ENCODE measurements at regions of chr22 and their contacts with region 1.

Region 1: GRCh38 chr22:30634471-30635233 is 929 bp upstream of the SLC35E4 start:
- DNase-seq: peak; percentile 92
- ATAC-seq: peak; percentile 67
- H3K4me3 Mint-ChIP-seq: peak overlapping the region; percentile 76
- H3K27ac Mint-ChIP-seq: peak overlapping the region; percentile 86
- H3K4me1 Mint-ChIP-seq: peaks cover 18% of the 10 kb centered on the region
- H3K27me3 Mint-ChIP-seq: no peaks in the 10 kb centered on the region

Region 2: GRCh38 chr22:30606455-30607299 is 28.0 kb before region 1 on chr22 and contains the start of gene TCN2:
- CTCF ChIA-PET with region 1: interaction called, 44 read pairs
- POLR2A ChIA-PET with region 1: interaction called, 3 read pairs
- DNase-seq: peak; percentile 62
- ATAC-seq: peak; percentile 57
- H3K4me3 Mint-ChIP-seq: peak within 1 kb of the TSS; percentile 60
- H3K27ac Mint-ChIP-seq: peak within 1 kb of the TSS; percentile 75
- H3K4me1 Mint-ChIP-seq: peaks cover 48% of the 10 kb centered on the region
- H3K27me3 Mint-ChIP-seq: no peaks in the 10 kb centered on the region
- total RNA-seq, gene TCN2: 0.24 to 0.34 TPM

Region 3: DNA sequence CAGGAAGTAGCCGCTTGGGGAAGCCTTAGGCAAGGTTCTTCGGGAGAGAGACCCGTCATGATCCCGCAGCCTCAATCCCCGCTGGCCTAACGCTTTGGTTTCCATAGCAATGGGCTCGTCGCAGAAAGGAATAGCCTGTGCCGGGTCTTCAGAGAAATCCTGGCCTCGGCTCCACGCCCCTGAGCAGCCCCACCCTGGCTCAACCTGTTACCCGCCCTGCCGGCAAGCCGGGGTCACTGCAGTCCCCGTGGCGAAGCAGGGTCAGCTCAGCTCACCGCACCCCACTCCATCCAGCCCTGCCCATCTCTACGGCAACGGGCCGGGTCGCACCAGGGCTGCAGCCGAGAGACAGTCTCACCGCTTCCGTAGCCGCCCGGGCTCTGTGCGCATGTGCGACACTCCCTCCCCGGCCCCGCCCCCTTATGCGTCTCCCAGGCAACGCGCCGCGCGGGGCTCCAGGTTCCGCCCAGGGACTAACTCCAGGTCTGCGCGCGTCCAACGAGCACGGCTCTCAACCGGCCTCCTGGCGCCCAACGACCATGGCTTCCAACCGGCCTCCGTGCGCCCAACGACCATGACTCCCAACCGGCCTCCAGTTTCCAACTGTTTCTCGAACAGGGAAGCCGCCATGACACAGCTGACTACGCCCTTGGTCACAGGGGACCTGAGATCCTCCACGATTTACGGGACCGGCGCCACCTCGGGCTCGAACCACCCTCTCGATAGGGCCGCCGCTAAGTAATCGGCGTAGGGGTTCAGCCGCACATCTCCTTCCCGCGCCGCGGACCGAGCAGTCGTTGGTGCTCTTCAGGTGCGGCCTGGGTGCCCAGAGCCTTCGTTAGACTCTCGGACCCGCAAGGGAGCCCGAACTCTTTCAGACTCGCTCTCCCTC is 33.1 kb after region 1 on chr22 and contains the start of gene DUSP18:
- CTCF ChIA-PET with region 1: interaction called, 31 read pairs
- POLR2A ChIA-PET with region 1: interaction called, 3 read pairs
- DNase-seq: peak; percentile 95
- ATAC-seq: peak; percentile 95
- H3K4me3 Mint-ChIP-seq: peak within 1 kb of the TSS; percentile 90
- H3K27ac Mint-ChIP-seq: peak within 1 kb of the TSS; percentile 83
- H3K4me1 Mint-ChIP-seq: peaks cover 15% of the 10 kb centered on the region
- H3K27me3 Mint-ChIP-seq: peaks cover 3% of the 10 kb centered on the region
- total RNA-seq, gene DUSP18: 7.0 to 7.6 TPM

Region 4: DNA sequence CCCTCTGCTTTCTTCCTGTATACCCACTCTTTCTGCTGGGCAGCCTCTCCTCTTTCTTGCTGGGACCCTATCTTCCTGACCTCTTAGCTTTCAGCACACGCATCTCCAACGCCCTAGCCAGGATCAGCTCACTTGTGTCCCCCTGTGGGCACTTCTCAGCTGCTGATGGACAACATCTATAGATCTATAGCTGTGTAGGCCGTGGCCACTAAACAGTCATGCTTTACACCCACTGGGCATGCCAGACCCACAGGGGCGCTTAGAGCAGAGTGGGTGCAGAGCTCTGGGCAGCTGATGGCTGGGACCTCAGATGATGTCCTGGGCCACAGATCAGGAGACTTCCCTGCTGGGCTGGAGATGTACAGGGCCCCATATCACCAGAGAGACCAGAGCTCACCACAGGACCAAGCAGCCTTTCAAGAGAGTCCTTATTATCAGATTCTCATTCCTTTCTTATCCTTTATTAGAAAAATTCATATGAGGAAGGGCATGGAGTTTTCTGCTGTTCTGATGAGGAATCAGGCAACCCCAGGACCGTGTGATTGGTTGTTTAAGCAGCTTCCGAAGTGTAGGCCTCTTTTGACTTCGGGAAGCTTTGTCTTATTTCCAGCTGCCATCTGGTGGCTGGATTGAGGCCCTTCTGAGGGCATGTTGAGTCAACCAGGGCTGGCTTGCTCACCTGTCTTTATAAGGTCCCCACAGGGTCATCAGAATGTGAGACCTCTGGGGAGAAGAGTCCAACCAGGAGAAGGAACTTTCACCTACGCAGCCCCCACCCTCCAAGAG is 120.5 kb after region 1 on chr22:
- CTCF ChIA-PET with region 1: interaction called, 179 read pairs
- POLR2A ChIA-PET with region 1: interaction called, 16 read pairs
- DNase-seq: peak; percentile 65
- ATAC-seq: peak; percentile 58
- H3K4me3 Mint-ChIP-seq: no peak overlapping the region
- H3K27ac Mint-ChIP-seq: no peak overlapping the region
- H3K4me1 Mint-ChIP-seq: no peaks in the 10 kb centered on the region
- H3K27me3 Mint-ChIP-seq: peaks cover 1% of the 10 kb centered on the region

Region 5: GRCh38 chr22:30920407-30920806 is 285.8 kb after region 1 on chr22:
- CTCF ChIA-PET with region 1: interaction called, 31 read pairs
- POLR2A ChIA-PET with region 1: interaction called, 3 read pairs
- DNase-seq: peak; percentile 88
- ATAC-seq: peak; percentile 85
- H3K4me3 Mint-ChIP-seq: peak overlapping the region; percentile 44
- H3K27ac Mint-ChIP-seq: no peak overlapping the region
- H3K4me1 Mint-ChIP-seq: peaks cover 17% of the 10 kb centered on the region
- H3K27me3 Mint-ChIP-seq: no peaks in the 10 kb centered on the region

Measured in activated CD8-positive, alpha-beta T cell treated with anti-CD3 and anti-CD28 coated beads, Interleukin-2, amount 10 ng/mL, durations not matched to agents 7 days and 5 days (primary cell).